A549 (cell line): ENCODE measurements at regions of chr14 and their contacts with region 1.

Region 1: DNA sequence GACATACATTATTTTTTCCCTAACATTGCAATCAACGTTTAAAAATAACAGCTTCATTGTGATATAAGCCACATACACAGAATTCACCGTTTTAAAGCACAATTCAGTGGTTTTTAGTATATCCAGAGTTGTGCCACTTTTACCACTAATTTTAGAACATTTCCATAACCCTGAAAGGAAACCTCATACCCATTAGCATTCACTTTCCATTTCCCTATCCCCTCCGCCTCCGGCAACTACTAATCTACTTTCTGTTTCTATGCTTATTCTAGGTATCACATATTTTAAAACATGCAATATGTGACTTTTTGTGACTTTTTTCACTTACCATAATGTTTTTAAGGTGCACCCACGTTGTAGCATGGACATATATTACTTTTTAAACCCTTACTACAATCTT is 55.6 kb upstream of the ISM2 start:
- DNase-seq: no peak
- ATAC-seq: no peak
- H3K4me3 ChIP-seq: no peak overlapping the region
- H3K27ac ChIP-seq: no peak overlapping the region
- H3K4me1 ChIP-seq: no peaks in the 10 kb centered on the region
- CTCF ChIP-seq: no peak
- EP300 ChIP-seq: no peak
- POLR2A ChIP-seq: no peak
- RAD21 ChIP-seq: no peak

Region 2: DNA sequence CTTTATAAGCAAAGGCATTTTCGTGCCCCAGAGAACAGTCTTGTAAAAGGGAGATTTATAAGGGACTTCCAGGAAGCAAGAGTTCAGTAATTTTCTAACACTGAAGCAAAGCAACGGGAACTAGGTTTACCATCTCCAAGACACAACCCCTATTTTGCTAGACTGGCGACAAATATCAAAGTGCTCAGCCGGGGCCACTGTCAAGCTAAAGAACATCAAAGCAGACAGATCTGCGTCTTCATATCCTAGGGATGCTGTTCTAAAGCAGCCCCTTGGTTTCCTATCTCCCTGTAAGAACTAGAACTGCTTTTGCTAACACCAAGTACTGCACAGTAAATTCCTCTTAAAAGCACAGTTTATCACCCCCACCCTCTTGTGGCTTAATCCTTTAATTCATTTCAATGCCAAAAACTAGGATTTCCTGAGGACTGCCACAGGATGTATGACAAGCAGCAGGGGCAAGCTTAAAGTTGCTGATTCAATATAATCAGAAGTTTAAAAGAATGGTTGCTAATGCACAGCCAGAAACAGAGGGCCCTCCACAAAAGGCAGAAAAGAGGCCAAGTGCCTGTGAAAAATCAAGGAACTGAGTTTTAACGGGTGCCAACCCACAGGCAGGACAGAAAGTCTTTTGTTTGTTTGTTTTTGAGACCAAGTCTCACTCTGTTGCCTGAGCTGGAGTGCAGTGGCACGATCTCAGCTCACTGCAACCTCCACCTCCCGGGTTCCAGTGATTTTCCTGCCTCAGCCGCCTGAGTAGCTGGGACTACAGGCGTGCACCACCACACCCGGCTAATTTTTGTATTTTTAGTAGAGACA is 11.6 kb before region 1 on chr14:
- CTCF ChIA-PET with region 1: interaction called, 12 read pairs
- POLR2A ChIA-PET with region 1: no interaction called
- DNase-seq: no peak
- ATAC-seq: no peak
- H3K4me3 ChIP-seq: no peak overlapping the region
- H3K27ac ChIP-seq: no peak overlapping the region
- H3K4me1 ChIP-seq: no peaks in the 10 kb centered on the region
- CTCF ChIP-seq: no peak
- EP300 ChIP-seq: no peak
- POLR2A ChIP-seq: no peak
- RAD21 ChIP-seq: no peak

Region 3: GRCh38 chr14:77654001-77654441 is 99.8 kb after region 1 on chr14:
- CTCF ChIA-PET with region 1: no interaction called
- POLR2A ChIA-PET with region 1: no interaction called
- DNase-seq: no peak
- ATAC-seq: peak in 1 of 2 experiments; percentile 24; a peak in 3 of 6 replicates
- H3K4me3 ChIP-seq: no peak overlapping the region
- H3K27ac ChIP-seq: no peak overlapping the region
- H3K4me1 ChIP-seq: no peaks in the 10 kb centered on the region
- CTCF ChIP-seq: no peak
- EP300 ChIP-seq: no peak
- POLR2A ChIP-seq: no peak
- RAD21 ChIP-seq: no peak

Region 4: DNA sequence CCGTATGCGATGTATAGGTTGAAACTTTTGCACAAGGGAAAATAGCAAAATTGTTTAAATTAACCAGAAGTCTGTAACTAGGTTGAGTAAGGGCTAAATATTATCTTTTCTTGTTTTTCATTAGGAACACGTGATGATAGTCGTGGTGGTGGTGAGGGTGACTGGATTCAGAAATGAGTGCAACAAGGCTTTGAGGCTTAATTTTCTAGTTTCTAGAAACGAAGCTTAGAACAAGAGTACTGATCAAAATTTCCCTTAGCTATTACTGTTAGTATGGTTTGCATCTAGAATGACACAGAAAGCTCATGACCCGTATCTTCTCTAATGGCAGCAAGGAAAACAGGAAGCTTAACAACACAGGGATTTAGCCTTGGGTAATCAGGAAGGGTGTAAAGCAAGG is 160.7 kb after region 1 on chr14:
- CTCF ChIA-PET with region 1: no interaction called
- POLR2A ChIA-PET with region 1: no interaction called
- DNase-seq: no peak
- ATAC-seq: no peak
- H3K4me3 ChIP-seq: no peak overlapping the region
- H3K27ac ChIP-seq: no peak overlapping the region
- H3K4me1 ChIP-seq: peaks cover 2% of the 10 kb centered on the region; the same call in 1 of the 3 replicates
- CTCF ChIP-seq: no peak
- EP300 ChIP-seq: no peak
- POLR2A ChIP-seq: no peak
- RAD21 ChIP-seq: no peak